IMR-90 (cell line): ENCODE measurements at regions of chr4 and their contacts with region 1.

Region 1: DNA sequence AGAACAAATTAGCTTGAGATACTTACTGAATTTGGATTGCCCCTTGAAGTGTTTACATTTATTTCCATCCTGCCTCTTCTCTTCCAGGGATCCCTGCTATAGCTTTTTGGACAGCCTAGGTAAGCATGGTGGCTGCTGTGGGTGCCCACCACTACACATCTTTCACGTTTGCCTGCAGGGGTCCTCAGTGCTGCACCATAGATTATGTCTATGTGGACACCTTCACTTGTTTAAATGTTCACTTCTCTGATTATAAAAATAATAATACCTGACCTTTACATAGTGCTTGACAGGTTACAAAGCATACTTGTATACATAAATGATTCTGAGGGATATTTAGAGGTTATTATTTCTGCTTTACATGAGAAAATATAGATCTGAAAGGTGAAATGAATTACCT is 67.9 kb upstream of the SLC4A4 start:
- DNase-seq: peak; percentile 45
- ATAC-seq: no peak
- H3K4me3 ChIP-seq: no peak overlapping the region
- H3K27ac ChIP-seq: no peak overlapping the region
- H3K4me1 ChIP-seq: peaks cover 14% of the 10 kb centered on the region
- H3K27me3 ChIP-seq: no peaks in the 10 kb centered on the region
- CTCF ChIP-seq: peak; percentile 52
- POLR2A ChIP-seq: no peak
- RAD21 ChIP-seq: peak; percentile 72

Region 2: GRCh38 chr4:71290074-71290473 is 19.2 kb after region 1 on chr4:
- CTCF ChIA-PET with region 1: no interaction called
- POLR2A ChIA-PET with region 1: no interaction called
- dilution Hi-C with region 1: no loop called
- in situ Hi-C with region 1: no loop called
- intact Hi-C with region 1: loop called (anchors 2 kb)
- DNase-seq: peak; percentile 95
- ATAC-seq: peak; percentile 71
- H3K4me3 ChIP-seq: no peak overlapping the region
- H3K27ac ChIP-seq: peak overlapping the region; percentile 20; the same call in 1 of the 2 replicates
- H3K4me1 ChIP-seq: peaks cover 12% of the 10 kb centered on the region
- H3K27me3 ChIP-seq: no peaks in the 10 kb centered on the region
- CTCF ChIP-seq: no peak
- POLR2A ChIP-seq: no peak
- RAD21 ChIP-seq: no peak